A549 (cell line): ENCODE measurements at regions of chr3 and their contacts with region 1.

Region 1: DNA sequence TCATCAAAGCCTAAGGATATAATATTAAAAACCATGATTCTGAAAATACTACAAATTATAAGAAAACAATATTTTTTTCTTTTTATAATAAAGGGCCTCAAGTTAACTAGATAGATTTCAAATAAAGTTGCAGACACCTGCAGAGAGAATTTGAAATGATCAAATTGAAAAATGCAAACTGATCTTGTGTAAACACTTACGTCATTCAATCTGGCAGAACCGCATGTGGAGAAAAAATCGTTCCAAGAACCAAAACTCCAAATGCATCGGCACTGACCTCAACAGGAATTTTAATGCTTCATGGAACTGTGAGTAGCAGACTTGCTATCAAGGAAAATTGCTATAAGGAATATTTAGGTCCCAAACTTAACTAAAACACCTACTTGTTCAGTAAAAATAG is 17.2 kb downstream of the CPA3 start:
- DNase-seq: no peak
- ATAC-seq: no peak
- H3K4me3 ChIP-seq: no peak overlapping the region
- H3K27ac ChIP-seq: no peak overlapping the region
- H3K4me1 ChIP-seq: no peaks in the 10 kb centered on the region
- CTCF ChIP-seq: no peak
- EP300 ChIP-seq: no peak
- POLR2A ChIP-seq: no peak
- RAD21 ChIP-seq: no peak

Region 2: GRCh38 chr3:148763986-148764935 is 118.0 kb before region 1 on chr3:
- CTCF ChIA-PET with region 1: no interaction called
- POLR2A ChIA-PET with region 1: no interaction called
- DNase-seq: no peak
- ATAC-seq: no peak
- H3K4me3 ChIP-seq: no peak overlapping the region
- H3K27ac ChIP-seq: no peak overlapping the region
- H3K4me1 ChIP-seq: no peaks in the 10 kb centered on the region
- CTCF ChIP-seq: no peak
- EP300 ChIP-seq: no peak
- POLR2A ChIP-seq: no peak
- RAD21 ChIP-seq: no peak

Region 3: GRCh38 chr3:148861277-148861869 is 20.9 kb before region 1 on chr3:
- CTCF ChIA-PET with region 1: interaction called, 10 read pairs
- POLR2A ChIA-PET with region 1: no interaction called
- DNase-seq: peak; percentile 29 to 50
- ATAC-seq: peak; percentile 67 to 79; a peak in 4 of 6 replicates
- H3K4me3 ChIP-seq: no peak overlapping the region
- H3K27ac ChIP-seq: no peak overlapping the region
- H3K4me1 ChIP-seq: no peaks in the 10 kb centered on the region
- CTCF ChIP-seq: peak; percentile 89
- EP300 ChIP-seq: no peak
- POLR2A ChIP-seq: no peak
- RAD21 ChIP-seq: peak; percentile 77

Region 4: DNA sequence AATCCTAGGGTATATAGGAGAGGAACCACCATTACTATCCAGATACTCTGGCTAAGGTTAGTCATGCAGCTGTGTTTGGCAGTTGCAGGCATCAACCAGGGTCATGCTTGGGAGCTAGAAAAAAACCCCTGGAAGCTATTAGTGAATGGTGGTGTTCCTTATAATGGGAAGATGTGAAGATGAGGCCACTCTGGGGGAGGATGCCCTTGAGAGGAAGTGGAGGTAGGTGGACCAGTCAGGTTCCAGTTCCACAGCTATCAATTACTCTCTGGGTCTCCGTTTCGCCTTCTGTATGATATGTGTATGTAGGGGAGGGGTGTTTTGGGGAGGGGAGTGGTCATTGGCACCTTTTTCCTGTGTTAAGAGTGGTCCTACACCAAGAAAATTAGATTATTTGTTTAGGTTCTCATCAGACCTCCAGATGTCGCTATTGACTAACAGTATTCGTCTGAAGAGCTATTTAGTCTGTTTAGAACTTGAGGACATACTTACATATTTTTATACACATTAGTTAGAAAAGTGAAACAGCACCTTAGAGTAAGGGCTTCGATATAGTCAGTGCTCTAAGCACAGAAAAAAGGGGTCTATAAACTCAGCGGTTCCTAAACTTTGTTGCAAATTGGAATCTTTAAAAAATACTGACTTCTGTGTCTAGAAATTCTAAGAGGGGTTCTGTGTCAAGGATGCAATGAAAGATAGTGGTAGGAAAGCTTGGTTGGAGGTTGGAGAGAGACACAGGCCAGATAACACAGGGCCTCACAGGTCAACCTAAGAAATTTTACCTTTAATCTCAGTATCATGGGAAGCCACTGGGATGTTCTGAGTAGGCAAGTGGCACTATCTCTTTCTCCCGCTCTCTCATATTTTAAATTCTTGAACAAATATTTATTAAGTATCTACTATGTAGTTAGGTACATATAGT is 238.0 kb after region 1 on chr3:
- CTCF ChIA-PET with region 1: no interaction called
- POLR2A ChIA-PET with region 1: no interaction called
- DNase-seq: peak; percentile 73 to 80
- ATAC-seq: peak; percentile 83 to 95
- H3K4me3 ChIP-seq: no peak overlapping the region
- H3K27ac ChIP-seq: peak overlapping the region; percentile 61 to 73
- H3K4me1 ChIP-seq: peaks cover 12% of the 10 kb centered on the region
- CTCF ChIP-seq: peak; percentile 94
- EP300 ChIP-seq: no peak
- POLR2A ChIP-seq: no peak
- RAD21 ChIP-seq: peak; percentile 95 to 97